ENCODE measurements at regions of chr17 and their contacts with region 1.

Region 1: GRCh38 chr17:68205251-68205807 is 42.5 kb upstream of the AMZ2 start:
- DNase-seq: peak; percentile 95
- ATAC-seq: peak; percentile 79
- H3K4me3 ChIP-seq: peak overlapping the region in 4 of 5 experiments; percentile 71 to 92 (median 76)
- H3K4me3 Mint-ChIP-seq: peak overlapping the region; percentile 93
- H3K27ac ChIP-seq: peak overlapping the region; percentile 88 to 92
- H3K27ac Mint-ChIP-seq: peak overlapping the region; percentile 96
- H3K4me1 ChIP-seq: peaks cover 25 to 37% of the 10 kb centered on the region in 2 donors
- H3K4me1 Mint-ChIP-seq: peaks cover 39% of the 10 kb centered on the region
- H3K27me3 ChIP-seq: peaks cover 0 to 4% (median under 1%) of the 10 kb centered on the region in 4 experiments
- H3K27me3 Mint-ChIP-seq: no peaks in the 10 kb centered on the region
- CTCF ChIP-seq: peak; percentile 85

Region 2: DNA sequence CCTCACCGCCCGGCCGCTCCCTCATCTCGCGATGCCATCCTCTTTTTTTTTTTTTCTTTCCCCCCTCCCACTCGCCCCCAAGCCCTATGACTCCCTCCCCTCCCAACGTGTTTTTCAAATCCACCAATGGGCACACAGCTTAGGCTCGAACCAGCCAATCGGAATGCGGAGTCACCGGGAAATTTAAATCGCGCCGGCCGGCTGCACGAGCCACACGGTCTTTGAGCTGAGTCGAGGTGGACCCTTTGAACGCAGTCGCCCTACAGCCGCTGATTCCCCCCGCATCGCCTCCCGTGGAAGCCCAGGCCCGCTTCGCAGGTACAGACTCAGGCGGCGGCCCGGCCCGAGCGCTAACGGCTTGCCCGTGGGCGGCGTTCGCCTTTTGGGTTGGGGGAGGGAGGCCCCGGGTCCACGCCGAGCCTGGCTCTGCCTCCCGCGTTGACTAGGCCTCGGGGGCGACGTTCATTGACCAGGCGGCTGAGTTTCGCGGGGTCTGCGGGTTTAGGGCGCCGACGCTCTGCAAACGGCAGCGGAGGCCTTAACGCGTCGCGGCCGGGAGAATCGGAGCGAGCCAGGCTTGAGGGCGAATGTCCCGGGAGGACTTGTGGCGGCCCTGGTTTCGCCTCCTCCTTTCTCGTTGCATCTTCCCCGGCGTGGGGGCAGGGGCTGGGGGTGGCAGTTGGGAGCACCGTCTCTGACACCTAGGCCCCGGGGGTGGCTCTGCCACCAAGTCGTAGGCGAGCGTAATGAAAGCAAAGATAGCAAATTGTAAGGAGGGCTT is 169.6 kb before region 1 on chr17 and contains the start of gene KPNA2:
- CTCF ChIA-PET with region 1: interaction called, 4 read pairs
- POLR2A ChIA-PET with region 1: no interaction called
- intact Hi-C with region 1: loop called (anchors 10 kb)
- DNase-seq: peak; percentile 96
- ATAC-seq: peak; percentile 88
- H3K4me3 ChIP-seq: peak within 1 kb of the TSS; percentile 68 to 98 (median 88)
- H3K4me3 Mint-ChIP-seq: peak within 1 kb of the TSS; percentile 95
- H3K27ac ChIP-seq: peak within 1 kb of the TSS; percentile 75 to 77
- H3K27ac Mint-ChIP-seq: peak within 1 kb of the TSS; percentile 67
- H3K4me1 ChIP-seq: peaks cover 7 to 9% of the 10 kb centered on the region in 2 donors
- H3K4me1 Mint-ChIP-seq: peaks cover 11% of the 10 kb centered on the region
- H3K27me3 ChIP-seq: no peaks in the 10 kb centered on the region
- H3K27me3 Mint-ChIP-seq: no peaks in the 10 kb centered on the region
- CTCF ChIP-seq: no peak
- total RNA-seq, gene KPNA2: 20.0 and 21.2 TPM in 2 replicates

Region 3: GRCh38 chr17:68179236-68179925 is 25.9 kb before region 1 on chr17:
- CTCF ChIA-PET with region 1: interaction called, 153 read pairs
- POLR2A ChIA-PET with region 1: interaction called, 113 read pairs
- intact Hi-C with region 1: loop called (anchors 1 kb)
- DNase-seq: no peak
- ATAC-seq: no peak
- H3K4me3 ChIP-seq: no peak overlapping the region
- H3K4me3 Mint-ChIP-seq: no peak overlapping the region
- H3K27ac ChIP-seq: no peak overlapping the region
- H3K27ac Mint-ChIP-seq: no peak overlapping the region
- H3K4me1 ChIP-seq: peaks cover 36 to 44% of the 10 kb centered on the region in 2 donors
- H3K4me1 Mint-ChIP-seq: peaks cover 34% of the 10 kb centered on the region
- H3K27me3 ChIP-seq: no peaks in the 10 kb centered on the region
- H3K27me3 Mint-ChIP-seq: no peaks in the 10 kb centered on the region
- CTCF ChIP-seq: no peak

Region 4: GRCh38 chr17:68190495-68190894 is 14.8 kb before region 1 on chr17:
- CTCF ChIA-PET with region 1: interaction called, 153 read pairs
- POLR2A ChIA-PET with region 1: interaction called, 113 read pairs
- intact Hi-C with region 1: no loop called
- DNase-seq: no peak
- ATAC-seq: no peak
- H3K4me3 ChIP-seq: no peak overlapping the region
- H3K4me3 Mint-ChIP-seq: no peak overlapping the region
- H3K27ac ChIP-seq: no peak overlapping the region
- H3K27ac Mint-ChIP-seq: no peak overlapping the region
- H3K4me1 ChIP-seq: peaks cover 6 to 8% of the 10 kb centered on the region in 2 donors
- H3K4me1 Mint-ChIP-seq: peaks cover 18% of the 10 kb centered on the region
- H3K27me3 ChIP-seq: peaks cover 0 to under 1% (median 0%) of the 10 kb centered on the region in 4 experiments
- H3K27me3 Mint-ChIP-seq: no peaks in the 10 kb centered on the region
- CTCF ChIP-seq: no peak

Region 5: GRCh38 chr17:68238164-68238872 is 33.0 kb after region 1 on chr17:
- CTCF ChIA-PET with region 1: interaction called, 22 read pairs
- POLR2A ChIA-PET with region 1: interaction called, 17 read pairs
- intact Hi-C with region 1: loop called (anchors 1 kb)
- DNase-seq: no peak
- ATAC-seq: no peak
- H3K4me3 ChIP-seq: peak overlapping the region; percentile 11 to 61 (median 49)
- H3K4me3 Mint-ChIP-seq: peak overlapping the region; percentile 85
- H3K27ac ChIP-seq: peak overlapping the region; percentile 99 to 100
- H3K27ac Mint-ChIP-seq: peak overlapping the region; percentile 99
- H3K4me1 ChIP-seq: peaks cover 42 to 60% of the 10 kb centered on the region in 2 donors
- H3K4me1 Mint-ChIP-seq: peaks cover 65% of the 10 kb centered on the region
- H3K27me3 ChIP-seq: no peaks in the 10 kb centered on the region
- H3K27me3 Mint-ChIP-seq: no peaks in the 10 kb centered on the region
- CTCF ChIP-seq: no peak

Region 6: GRCh38 chr17:68291844-68292695 is 86.7 kb after region 1 on chr17:
- CTCF ChIA-PET with region 1: interaction called, 3 read pairs
- POLR2A ChIA-PET with region 1: interaction called, 6 read pairs
- intact Hi-C with region 1: loop called (anchors 1 kb)
- DNase-seq: peak; percentile 97
- ATAC-seq: peak; percentile 78
- H3K4me3 ChIP-seq: peak overlapping the region; percentile 47 to 74 (median 61)
- H3K4me3 Mint-ChIP-seq: peak overlapping the region; percentile 95
- H3K27ac ChIP-seq: peak overlapping the region; percentile 86 to 89
- H3K27ac Mint-ChIP-seq: peak overlapping the region; percentile 94
- H3K4me1 ChIP-seq: peaks cover 31 to 43% of the 10 kb centered on the region in 2 donors
- H3K4me1 Mint-ChIP-seq: peaks cover 46% of the 10 kb centered on the region
- H3K27me3 ChIP-seq: no peaks in the 10 kb centered on the region
- H3K27me3 Mint-ChIP-seq: no peaks in the 10 kb centered on the region
- CTCF ChIP-seq: no peak

Region 7: GRCh38 chr17:68435876-68436842 is 230.8 kb after region 1 on chr17:
- CTCF ChIA-PET with region 1: interaction called, 22 read pairs
- POLR2A ChIA-PET with region 1: no interaction called
- intact Hi-C with region 1: loop called (anchors 1 kb)
- DNase-seq: peak; percentile 86
- ATAC-seq: peak; percentile 74
- H3K4me3 ChIP-seq: no peak overlapping the region
- H3K4me3 Mint-ChIP-seq: peak overlapping the region; percentile 63
- H3K27ac ChIP-seq: no peak overlapping the region
- H3K27ac Mint-ChIP-seq: peak overlapping the region; percentile 13
- H3K4me1 ChIP-seq: peaks cover 39 to 40% of the 10 kb centered on the region in 2 donors
- H3K4me1 Mint-ChIP-seq: peaks cover 50% of the 10 kb centered on the region
- H3K27me3 ChIP-seq: no peaks in the 10 kb centered on the region
- H3K27me3 Mint-ChIP-seq: no peaks in the 10 kb centered on the region
- CTCF ChIP-seq: peak; percentile 85